B cell (primary cell): ENCODE measurements at regions of chr6 and their contacts with region 1.

Region 1: DNA sequence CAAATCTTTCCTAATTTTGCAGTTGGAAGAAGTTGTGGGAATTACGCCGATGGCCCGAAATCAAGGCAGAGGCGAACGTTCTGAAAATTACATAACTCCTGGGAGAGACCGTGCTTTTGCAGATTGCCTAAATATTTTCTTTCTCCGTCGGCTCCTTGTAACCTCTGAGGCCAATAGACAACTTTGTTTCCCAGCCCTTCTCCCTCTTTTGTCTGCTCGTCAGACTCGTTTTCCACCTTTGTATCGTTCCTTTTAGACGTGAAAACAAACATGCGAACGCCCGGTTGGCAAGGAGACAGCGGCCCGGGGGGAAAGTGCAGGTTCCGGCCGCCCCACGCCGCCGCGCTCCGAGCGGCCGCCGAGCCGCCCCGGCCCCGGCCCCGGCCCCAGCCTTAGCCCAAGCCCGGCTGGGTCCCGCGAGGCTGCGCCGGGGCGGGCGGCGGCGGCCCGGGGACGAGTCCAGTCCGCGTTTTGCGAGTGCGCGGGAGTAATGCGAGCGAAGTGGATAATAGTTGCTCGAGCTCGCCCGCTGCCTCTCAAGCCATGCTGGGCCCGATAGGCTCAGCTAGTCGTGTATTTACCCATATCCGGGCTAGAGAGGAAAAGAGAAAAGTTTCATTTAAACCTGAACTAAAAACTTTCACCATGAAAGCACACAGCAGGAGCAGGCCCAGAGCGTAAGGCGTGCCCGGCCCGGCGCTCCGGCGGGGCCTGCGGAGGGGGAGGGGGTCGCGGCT is at the start of gene ARID1B:
- DNase-seq: peak; percentile 93
- ATAC-seq: peak; percentile 65
- H3K4me3 ChIP-seq: peak within 1 kb of the TSS; percentile 70 to 92 (median 81)
- H3K4me3 Mint-ChIP-seq: peak within 1 kb of the TSS; percentile 94
- H3K27ac ChIP-seq: peak within 1 kb of the TSS; percentile 92 to 94
- H3K27ac Mint-ChIP-seq: peak within 1 kb of the TSS; percentile 98
- H3K4me1 ChIP-seq: peaks cover 12 to 26% of the 10 kb centered on the region in 2 donors
- H3K4me1 Mint-ChIP-seq: peaks cover 42% of the 10 kb centered on the region
- H3K27me3 ChIP-seq: no peaks in the 10 kb centered on the region
- H3K27me3 Mint-ChIP-seq: no peaks in the 10 kb centered on the region
- CTCF ChIP-seq: no peak
- total RNA-seq, gene ARID1B: 280 and 297 TPM in 2 replicates

Region 2: DNA sequence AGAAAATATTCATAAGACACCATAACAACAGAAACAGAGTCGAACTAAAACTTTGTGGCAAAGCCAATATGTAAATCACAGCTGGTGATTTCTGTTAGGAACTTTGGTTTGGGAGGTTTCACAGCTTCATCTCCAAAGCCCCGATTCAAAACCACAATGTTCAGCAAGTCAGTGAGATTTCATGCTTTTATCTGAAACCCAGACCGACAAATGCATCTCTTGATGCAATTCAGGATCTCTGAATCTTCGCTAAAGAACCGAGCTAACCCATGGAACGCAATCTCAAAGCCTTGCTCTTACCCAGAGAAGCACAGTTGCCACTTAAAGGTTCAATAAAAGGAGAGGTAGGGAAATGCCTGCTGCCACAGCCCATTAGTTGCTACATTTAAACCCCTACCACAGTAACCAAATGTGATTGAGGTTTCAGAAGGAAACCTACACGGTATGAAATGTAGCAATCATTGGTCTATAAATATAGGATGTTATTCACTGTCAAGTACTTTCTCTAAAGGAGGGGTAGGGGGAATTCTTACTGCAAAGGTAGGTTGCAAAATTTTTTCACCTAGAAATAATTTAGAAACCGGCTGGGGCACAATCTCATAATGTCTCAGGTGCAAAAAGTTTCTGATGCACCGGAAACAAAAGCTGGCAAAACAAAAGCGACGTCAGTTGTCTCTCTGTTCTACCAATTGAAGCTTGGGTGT is 380.8 kb before region 1 on chr6:
- CTCF ChIA-PET with region 1: no interaction called
- POLR2A ChIA-PET with region 1: interaction called, 7 read pairs
- intact Hi-C with region 1: loop called (anchors 5 kb)
- DNase-seq: peak; percentile 56
- ATAC-seq: peak; percentile 60
- H3K4me3 ChIP-seq: peak overlapping the region in 3 of 5 experiments; percentile 18 to 45 (median 32)
- H3K4me3 Mint-ChIP-seq: peak overlapping the region; percentile 66
- H3K27ac ChIP-seq: peak overlapping the region; percentile 76 to 77
- H3K27ac Mint-ChIP-seq: peak overlapping the region; percentile 91
- H3K4me1 ChIP-seq: peaks cover 73 to 74% of the 10 kb centered on the region in 2 donors
- H3K4me1 Mint-ChIP-seq: peaks cover 72% of the 10 kb centered on the region
- H3K27me3 ChIP-seq: no peaks in the 10 kb centered on the region
- H3K27me3 Mint-ChIP-seq: peaks cover 9% of the 10 kb centered on the region
- CTCF ChIP-seq: no peak

Region 3: GRCh38 chr6:156634951-156635371 is 142.0 kb before region 1 on chr6:
- CTCF ChIA-PET with region 1: interaction called, 5 read pairs
- POLR2A ChIA-PET with region 1: interaction called, 3 read pairs
- intact Hi-C with region 1: loop called (anchors 2 kb)
- DNase-seq: peak; percentile 17
- ATAC-seq: no peak
- H3K4me3 ChIP-seq: peak overlapping the region in 3 of 5 experiments; percentile 10 to 37 (median 35)
- H3K4me3 Mint-ChIP-seq: peak overlapping the region; percentile 84
- H3K27ac ChIP-seq: peak overlapping the region; percentile 77 to 85
- H3K27ac Mint-ChIP-seq: peak overlapping the region; percentile 94
- H3K4me1 ChIP-seq: peaks cover 44 to 48% of the 10 kb centered on the region in 2 donors
- H3K4me1 Mint-ChIP-seq: peaks cover 51% of the 10 kb centered on the region
- H3K27me3 ChIP-seq: no peaks in the 10 kb centered on the region
- H3K27me3 Mint-ChIP-seq: no peaks in the 10 kb centered on the region
- CTCF ChIP-seq: no peak

Region 4: DNA sequence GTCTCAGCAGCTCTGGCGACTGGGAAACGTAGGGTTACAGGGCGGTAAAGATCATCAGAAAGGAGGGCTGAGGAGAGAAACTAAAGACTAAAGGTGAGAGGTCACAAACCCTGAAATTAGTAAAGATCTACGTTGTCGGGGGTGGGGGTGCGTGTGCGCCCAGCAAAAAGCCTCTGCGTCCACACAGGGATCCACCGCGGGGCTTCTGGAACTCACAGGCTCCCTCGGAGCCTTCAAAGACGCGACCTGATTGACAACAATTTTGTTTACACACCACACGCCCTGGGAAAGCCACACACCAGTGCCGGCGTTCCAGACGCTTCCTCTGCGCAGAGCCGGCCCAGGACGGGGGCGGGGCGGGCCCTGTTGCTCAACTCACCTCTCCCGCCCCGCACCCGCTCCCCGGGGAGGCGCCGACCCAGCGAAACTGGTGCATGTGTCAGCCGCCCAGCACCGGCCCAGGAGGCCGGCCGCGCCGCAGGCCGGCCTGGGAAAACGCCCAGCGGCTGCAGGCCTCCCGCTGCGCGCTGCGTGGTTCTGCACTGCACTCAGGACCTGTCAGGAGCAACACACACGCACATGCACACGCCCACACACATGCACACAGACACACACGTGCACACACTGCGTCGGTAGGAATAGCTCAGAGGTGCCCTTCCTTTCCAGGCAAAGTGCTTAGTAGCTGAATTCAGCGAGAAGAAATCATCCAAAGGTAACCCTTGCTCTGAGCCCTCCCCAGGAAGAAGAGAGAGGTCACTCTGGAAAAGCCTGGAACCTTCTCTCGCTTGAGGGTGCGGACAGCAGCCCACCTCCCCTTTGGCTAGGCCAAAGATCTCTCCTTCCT is 57.1 kb before region 1 on chr6:
- CTCF ChIA-PET with region 1: interaction called, 3 read pairs
- POLR2A ChIA-PET with region 1: interaction called, 8 read pairs
- intact Hi-C with region 1: loop called (anchors 1 kb)
- DNase-seq: peak; percentile 81
- ATAC-seq: peak; percentile 84
- H3K4me3 ChIP-seq: peak overlapping the region; percentile 47 to 69 (median 55)
- H3K4me3 Mint-ChIP-seq: peak overlapping the region; percentile 92
- H3K27ac ChIP-seq: peak overlapping the region; percentile 83 to 90
- H3K27ac Mint-ChIP-seq: peak overlapping the region; percentile 97
- H3K4me1 ChIP-seq: peaks cover 18 to 32% of the 10 kb centered on the region in 2 donors
- H3K4me1 Mint-ChIP-seq: peaks cover 37% of the 10 kb centered on the region
- H3K27me3 ChIP-seq: no peaks in the 10 kb centered on the region
- H3K27me3 Mint-ChIP-seq: no peaks in the 10 kb centered on the region
- CTCF ChIP-seq: no peak

Region 5: DNA sequence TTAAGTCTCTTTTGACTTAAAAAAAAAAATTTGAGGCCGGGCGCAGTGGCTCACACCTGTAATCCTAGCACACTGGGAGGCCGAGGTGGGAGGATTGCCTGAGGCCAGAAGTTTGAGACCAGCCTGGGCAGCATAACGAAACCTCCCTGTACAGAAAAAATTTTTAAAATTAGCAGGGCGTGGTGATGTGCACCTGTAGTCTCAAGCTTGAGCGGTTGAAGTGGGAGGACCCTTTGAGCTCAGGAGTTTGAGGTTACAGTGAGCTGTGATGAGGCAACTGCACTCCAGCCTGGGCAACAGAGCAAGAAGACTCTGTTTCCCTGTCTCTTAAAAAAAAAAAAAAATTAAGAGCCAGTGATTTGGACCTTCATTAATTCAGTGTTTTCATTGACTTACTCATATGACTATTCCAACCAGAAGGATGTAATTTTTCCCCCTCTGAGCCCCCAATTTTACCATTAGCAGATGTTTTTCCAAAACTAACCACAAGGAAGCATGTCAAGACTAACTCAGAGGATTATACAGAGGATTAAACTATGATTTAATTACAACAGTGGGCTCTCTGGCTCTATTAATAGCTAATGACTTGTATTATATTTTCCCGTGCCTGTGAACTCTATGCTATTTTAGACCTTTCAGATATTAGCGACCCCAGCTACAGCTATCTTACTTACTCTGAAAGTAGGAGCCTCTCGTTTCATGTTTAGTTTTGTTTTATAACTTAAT is 75.3 kb after region 1 on chr6:
- CTCF ChIA-PET with region 1: no interaction called
- POLR2A ChIA-PET with region 1: no interaction called
- intact Hi-C with region 1: loop called (anchors 5 kb)
- DNase-seq: peak; percentile 70
- ATAC-seq: peak; percentile 75
- H3K4me3 ChIP-seq: peak overlapping the region in 1 of 5 experiments; percentile 35
- H3K4me3 Mint-ChIP-seq: peak overlapping the region; percentile 30
- H3K27ac ChIP-seq: peak overlapping the region in 1 of 2 donors; percentile 62
- H3K27ac Mint-ChIP-seq: peak overlapping the region; percentile 23
- H3K4me1 ChIP-seq: peaks cover 80 to 85% of the 10 kb centered on the region in 2 donors
- H3K4me1 Mint-ChIP-seq: peaks cover 95% of the 10 kb centered on the region
- H3K27me3 ChIP-seq: no peaks in the 10 kb centered on the region
- H3K27me3 Mint-ChIP-seq: no peaks in the 10 kb centered on the region
- CTCF ChIP-seq: no peak

Region 6: GRCh38 chr6:156901309-156902019 is 124.5 kb after region 1 on chr6:
- CTCF ChIA-PET with region 1: no interaction called
- POLR2A ChIA-PET with region 1: no interaction called
- intact Hi-C with region 1: no loop called
- DNase-seq: no peak
- ATAC-seq: no peak
- H3K4me3 ChIP-seq: no peak overlapping the region
- H3K4me3 Mint-ChIP-seq: no peak overlapping the region
- H3K27ac ChIP-seq: peak overlapping the region in 1 of 2 donors; percentile 11
- H3K27ac Mint-ChIP-seq: peak overlapping the region; percentile 32
- H3K4me1 ChIP-seq: no peaks in the 10 kb centered on the region
- H3K4me1 Mint-ChIP-seq: peaks cover 33% of the 10 kb centered on the region
- H3K27me3 ChIP-seq: no peaks in the 10 kb centered on the region
- H3K27me3 Mint-ChIP-seq: no peaks in the 10 kb centered on the region
- CTCF ChIP-seq: no peak

Region 7: GRCh38 chr6:156933201-156934068 is 156.4 kb after region 1 on chr6:
- CTCF ChIA-PET with region 1: interaction called, 5 read pairs
- POLR2A ChIA-PET with region 1: no interaction called
- intact Hi-C with region 1: loop called (anchors 5 kb)
- DNase-seq: no peak
- ATAC-seq: no peak
- H3K4me3 ChIP-seq: no peak overlapping the region
- H3K4me3 Mint-ChIP-seq: no peak overlapping the region
- H3K27ac ChIP-seq: peak overlapping the region in 1 of 2 donors; percentile 47
- H3K27ac Mint-ChIP-seq: peak overlapping the region; percentile 2
- H3K4me1 ChIP-seq: peaks cover 0 to 11% of the 10 kb centered on the region in 2 donors
- H3K4me1 Mint-ChIP-seq: peaks cover 71% of the 10 kb centered on the region
- H3K27me3 ChIP-seq: no peaks in the 10 kb centered on the region
- H3K27me3 Mint-ChIP-seq: no peaks in the 10 kb centered on the region
- CTCF ChIP-seq: no peak